GM12878 (cell line): ENCODE measurements at regions of chr2 and their contacts with region 1.

Region 1: DNA sequence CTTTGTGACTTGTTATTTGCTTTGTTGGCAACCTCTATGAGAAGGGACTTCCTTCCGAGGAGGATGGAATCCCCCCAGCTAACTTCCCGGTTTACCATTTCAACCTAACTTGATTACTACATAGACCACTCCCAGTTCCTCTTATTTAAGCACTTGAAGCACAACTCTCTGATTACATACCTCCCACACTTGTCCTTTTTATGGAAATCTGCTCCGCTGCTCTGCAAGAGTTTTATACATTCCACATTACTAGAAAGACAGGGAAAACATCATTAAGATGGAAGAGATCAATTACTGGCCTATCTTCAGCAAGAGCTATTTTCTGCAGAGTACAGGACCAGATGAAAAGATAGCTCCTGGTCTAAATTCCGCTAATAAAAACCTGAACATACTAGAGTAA is 160.0 kb upstream of the PGAP1 start:
- DNase-seq: no peak
- ATAC-seq: peak; percentile 81
- H3K4me3 ChIP-seq: no peak overlapping the region
- H3K27ac ChIP-seq: no peak overlapping the region
- H3K4me1 ChIP-seq: no peaks in the 10 kb centered on the region
- H3K27me3 ChIP-seq: no peaks in the 10 kb centered on the region
- CTCF ChIP-seq: no peak
- EP300 ChIP-seq: no peak
- POLR2A ChIP-seq: no peak
- RAD21 ChIP-seq: no peak

Region 2: DNA sequence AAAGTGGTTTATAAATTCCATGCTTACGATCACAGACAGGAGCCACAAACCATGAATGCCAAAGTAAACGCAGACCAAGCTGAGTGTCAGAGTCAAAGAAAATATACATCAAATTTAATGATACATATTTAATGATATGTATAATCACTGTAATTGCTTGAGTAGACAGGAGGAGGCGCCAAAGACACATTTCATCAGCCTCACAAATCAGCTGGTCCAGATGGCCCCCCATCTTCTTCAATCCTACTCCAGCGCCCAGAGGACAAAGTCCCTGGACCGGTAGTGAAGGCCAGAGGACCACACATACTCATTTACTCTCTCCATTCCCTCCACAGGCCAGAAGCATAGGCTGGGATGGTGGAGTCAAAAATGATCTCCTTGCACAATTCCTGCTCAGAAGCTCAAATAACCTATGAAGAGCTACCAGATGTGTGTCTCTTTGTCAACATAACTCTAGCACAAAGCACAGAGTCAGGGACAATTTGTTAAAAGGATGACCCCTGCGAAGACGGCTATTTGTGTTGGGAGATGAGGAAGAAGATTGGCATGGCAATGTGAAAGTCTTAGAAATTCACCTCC is 10.7 kb before region 1 on chr2:
- CTCF ChIA-PET with region 1: interaction called, 10 read pairs
- POLR2A ChIA-PET with region 1: no interaction called
- RAD21 ChIA-PET with region 1: no interaction called
- SMC1A ChIA-PET with region 1: interaction called, 4 read pairs
- in situ Hi-C with region 1: no loop called
- intact Hi-C with region 1: no loop called
- DNase-seq: no peak
- ATAC-seq: peak; percentile 44; the same call in 2 of the 3 replicates
- H3K4me3 ChIP-seq: no peak overlapping the region
- H3K27ac ChIP-seq: no peak overlapping the region
- H3K4me1 ChIP-seq: peaks cover 3% of the 10 kb centered on the region; the same call in 1 of the 2 replicates
- H3K27me3 ChIP-seq: no peaks in the 10 kb centered on the region
- CTCF ChIP-seq: peak; percentile 23 to 46 (median 25); a peak in 4 of 6 replicates
- EP300 ChIP-seq: no peak
- POLR2A ChIP-seq: no peak
- RAD21 ChIP-seq: peak; percentile 37

Region 3: DNA sequence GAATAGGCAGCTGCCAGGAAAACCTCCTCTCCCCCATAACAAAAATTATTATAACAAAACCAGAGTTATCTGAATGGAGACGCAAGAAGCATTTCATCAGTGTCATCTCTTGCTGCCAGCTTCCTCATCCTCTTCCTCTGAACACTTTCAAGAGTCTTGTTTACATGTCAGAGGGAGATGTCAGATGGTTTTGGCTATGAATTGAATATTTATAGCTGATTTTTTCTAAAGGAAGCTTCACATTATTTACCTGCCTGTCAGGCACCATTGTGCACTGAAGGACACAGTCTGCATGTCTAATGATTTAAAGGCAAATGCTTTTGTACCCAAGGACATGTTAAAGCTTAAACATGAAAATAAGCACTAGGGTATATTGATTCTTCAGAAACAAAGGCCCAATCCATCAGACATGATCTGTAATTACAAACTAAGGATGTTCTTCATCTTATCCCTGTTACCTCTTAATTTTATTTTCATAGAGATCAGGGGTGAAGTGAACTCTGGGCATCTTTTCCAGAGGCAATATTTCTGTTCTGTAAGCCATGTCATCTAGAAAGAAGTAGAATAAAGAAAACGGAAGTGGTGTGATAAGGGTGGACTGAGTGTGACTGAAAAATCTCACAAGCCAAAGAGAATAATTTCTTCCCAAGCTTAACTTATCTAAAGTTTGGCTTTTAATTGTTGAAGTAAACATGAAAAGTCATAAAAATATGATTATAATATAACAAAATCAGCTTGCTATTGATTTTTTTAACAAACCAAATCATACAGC is 55.4 kb after region 1 on chr2:
- CTCF ChIA-PET with region 1: no interaction called
- POLR2A ChIA-PET with region 1: no interaction called
- RAD21 ChIA-PET with region 1: no interaction called
- SMC1A ChIA-PET with region 1: no interaction called
- in situ Hi-C with region 1: no loop called
- intact Hi-C with region 1: no loop called
- DNase-seq: no peak
- ATAC-seq: no peak
- H3K4me3 ChIP-seq: no peak overlapping the region
- H3K27ac ChIP-seq: no peak overlapping the region; the same call in 1 of the 2 replicates
- H3K4me1 ChIP-seq: peaks cover 52% of the 10 kb centered on the region
- H3K27me3 ChIP-seq: no peaks in the 10 kb centered on the region
- CTCF ChIP-seq: no peak
- EP300 ChIP-seq: no peak
- POLR2A ChIP-seq: no peak
- RAD21 ChIP-seq: no peak